CD4-positive, alpha-beta T cell (primary cell): ENCODE measurements at regions of chr1 and their contacts with region 1.

Region 1: GRCh38 chr1:37514350-37515184 is at the start of gene MEAF6:
- DNase-seq: peak; percentile 72 to 93 (median 80)
- ATAC-seq: peak; percentile 95
- H3K4me3 ChIP-seq: peak within 1 kb of the TSS; percentile 86
- H3K4me3 Mint-ChIP-seq: peak within 1 kb of the TSS; percentile 97
- H3K27ac ChIP-seq: peak within 1 kb of the TSS; percentile 79 to 95
- H3K27ac Mint-ChIP-seq: peak within 1 kb of the TSS; percentile 95
- H3K4me1 ChIP-seq: peaks cover 22% of the 10 kb centered on the region
- H3K4me1 Mint-ChIP-seq: peaks cover 46% of the 10 kb centered on the region
- H3K27me3 ChIP-seq: no peaks in the 10 kb centered on the region
- H3K27me3 Mint-ChIP-seq: no peaks in the 10 kb centered on the region
- CTCF ChIP-seq: peak; percentile 75
- total RNA-seq, gene MEAF6: 39.0 to 41.5 TPM

Region 2: GRCh38 chr1:37474046-37474759 is 40.4 kb before region 1 on chr1 and contains the start of gene ZC3H12A:
- CTCF ChIA-PET with region 1: interaction called, 28 read pairs
- POLR2A ChIA-PET with region 1: interaction called, 41 read pairs
- intact Hi-C with region 1: loop called in 1 of 2 experiments (anchors 2 kb)
- DNase-seq: peak; percentile 83 to 98 (median 93)
- ATAC-seq: peak; percentile 61
- H3K4me3 ChIP-seq: peak within 1 kb of the TSS; percentile 92
- H3K4me3 Mint-ChIP-seq: peak within 1 kb of the TSS; percentile 97
- H3K27ac ChIP-seq: peak within 1 kb of the TSS; percentile 95 to 97
- H3K27ac Mint-ChIP-seq: peak within 1 kb of the TSS; percentile 100
- H3K4me1 ChIP-seq: peaks cover 69% of the 10 kb centered on the region
- H3K4me1 Mint-ChIP-seq: peaks cover 66% of the 10 kb centered on the region
- H3K27me3 ChIP-seq: no peaks in the 10 kb centered on the region
- H3K27me3 Mint-ChIP-seq: no peaks in the 10 kb centered on the region
- CTCF ChIP-seq: no peak
- total RNA-seq, gene ZC3H12A: 164 to 165 TPM

Region 3: DNA sequence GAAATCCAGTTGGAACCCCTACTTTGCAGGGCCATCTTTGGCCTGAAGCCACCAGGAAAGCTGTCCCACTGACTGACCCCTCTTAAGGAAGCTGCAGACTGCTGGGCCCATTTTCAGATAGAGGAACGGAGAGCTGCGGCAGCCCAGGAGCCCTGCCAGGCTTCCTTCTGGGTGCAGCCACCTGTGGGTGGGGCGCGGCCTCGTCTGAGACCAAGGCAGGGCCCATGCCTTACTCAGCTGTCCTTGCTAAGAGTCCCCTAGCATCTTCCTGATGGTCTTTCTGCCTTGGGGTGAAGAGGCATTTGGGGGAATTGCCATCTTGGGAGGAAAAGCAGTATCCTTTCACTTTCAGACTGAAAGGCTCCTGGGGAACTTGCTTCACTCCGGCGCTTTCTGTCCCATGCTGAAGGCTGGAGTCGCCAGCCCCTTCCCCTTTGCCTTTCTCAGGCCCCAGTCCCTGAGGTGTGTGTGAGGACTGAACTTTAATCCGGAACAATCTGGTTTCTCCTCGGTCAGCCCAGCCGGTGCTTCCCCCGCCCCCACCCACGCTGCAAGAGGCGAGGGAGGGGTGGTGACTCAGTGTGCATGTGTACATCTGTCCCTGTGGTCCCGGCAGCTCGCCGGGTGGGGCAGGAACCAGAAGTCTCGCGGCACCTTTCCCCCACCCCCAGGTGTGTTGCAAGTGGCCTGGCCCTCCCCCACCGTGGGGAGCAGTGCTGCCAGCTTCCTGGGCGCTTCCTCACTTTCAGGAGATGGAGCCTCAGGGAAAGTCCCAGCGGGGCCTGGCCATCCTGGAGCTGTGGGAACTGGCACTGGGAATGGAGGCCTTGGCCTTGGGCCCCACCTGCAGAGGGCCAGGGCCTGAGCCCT is 35.1 kb before region 1 on chr1:
- CTCF ChIA-PET with region 1: interaction called, 28 read pairs
- POLR2A ChIA-PET with region 1: interaction called, 41 read pairs
- intact Hi-C with region 1: loop called in 1 of 2 experiments (anchors 2 kb)
- DNase-seq: peak; percentile 63 to 96 (median 89)
- ATAC-seq: peak; percentile 57
- H3K4me3 ChIP-seq: peak overlapping the region; percentile 92
- H3K4me3 Mint-ChIP-seq: peak overlapping the region; percentile 97
- H3K27ac ChIP-seq: peak overlapping the region; percentile 95 to 97
- H3K27ac Mint-ChIP-seq: peak overlapping the region; percentile 100
- H3K4me1 ChIP-seq: peaks cover 67% of the 10 kb centered on the region
- H3K4me1 Mint-ChIP-seq: peaks cover 56% of the 10 kb centered on the region
- H3K27me3 ChIP-seq: no peaks in the 10 kb centered on the region
- H3K27me3 Mint-ChIP-seq: no peaks in the 10 kb centered on the region
- CTCF ChIP-seq: no peak

Region 4: DNA sequence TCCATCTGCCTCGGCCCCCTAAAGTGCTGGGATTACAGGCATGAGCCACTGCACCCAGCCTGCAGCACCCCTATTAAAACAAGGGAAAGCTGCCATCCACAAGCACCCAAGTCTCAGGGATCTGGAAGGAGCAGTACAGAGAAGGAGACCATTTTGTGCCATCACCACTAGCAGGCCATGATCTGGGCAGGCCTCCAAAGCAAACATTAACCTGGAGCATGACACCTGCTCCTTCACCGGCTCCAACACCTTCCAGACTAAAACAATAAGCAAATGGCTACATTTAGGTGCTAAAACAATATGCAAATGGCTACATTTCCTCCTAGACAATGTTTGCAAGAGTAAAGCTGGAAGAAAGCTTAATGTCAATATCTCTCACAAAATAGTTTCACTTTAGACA is 16.7 kb before region 1 on chr1:
- CTCF ChIA-PET with region 1: interaction called, 12 read pairs
- POLR2A ChIA-PET with region 1: interaction called, 8 read pairs
- intact Hi-C with region 1: no loop called
- DNase-seq: no peak
- ATAC-seq: no peak
- H3K4me3 ChIP-seq: no peak overlapping the region
- H3K4me3 Mint-ChIP-seq: no peak overlapping the region
- H3K27ac ChIP-seq: no peak overlapping the region
- H3K27ac Mint-ChIP-seq: no peak overlapping the region
- H3K4me1 ChIP-seq: no peaks in the 10 kb centered on the region
- H3K4me1 Mint-ChIP-seq: peaks cover 28% of the 10 kb centered on the region
- H3K27me3 ChIP-seq: no peaks in the 10 kb centered on the region
- H3K27me3 Mint-ChIP-seq: no peaks in the 10 kb centered on the region
- CTCF ChIP-seq: no peak

Region 5: DNA sequence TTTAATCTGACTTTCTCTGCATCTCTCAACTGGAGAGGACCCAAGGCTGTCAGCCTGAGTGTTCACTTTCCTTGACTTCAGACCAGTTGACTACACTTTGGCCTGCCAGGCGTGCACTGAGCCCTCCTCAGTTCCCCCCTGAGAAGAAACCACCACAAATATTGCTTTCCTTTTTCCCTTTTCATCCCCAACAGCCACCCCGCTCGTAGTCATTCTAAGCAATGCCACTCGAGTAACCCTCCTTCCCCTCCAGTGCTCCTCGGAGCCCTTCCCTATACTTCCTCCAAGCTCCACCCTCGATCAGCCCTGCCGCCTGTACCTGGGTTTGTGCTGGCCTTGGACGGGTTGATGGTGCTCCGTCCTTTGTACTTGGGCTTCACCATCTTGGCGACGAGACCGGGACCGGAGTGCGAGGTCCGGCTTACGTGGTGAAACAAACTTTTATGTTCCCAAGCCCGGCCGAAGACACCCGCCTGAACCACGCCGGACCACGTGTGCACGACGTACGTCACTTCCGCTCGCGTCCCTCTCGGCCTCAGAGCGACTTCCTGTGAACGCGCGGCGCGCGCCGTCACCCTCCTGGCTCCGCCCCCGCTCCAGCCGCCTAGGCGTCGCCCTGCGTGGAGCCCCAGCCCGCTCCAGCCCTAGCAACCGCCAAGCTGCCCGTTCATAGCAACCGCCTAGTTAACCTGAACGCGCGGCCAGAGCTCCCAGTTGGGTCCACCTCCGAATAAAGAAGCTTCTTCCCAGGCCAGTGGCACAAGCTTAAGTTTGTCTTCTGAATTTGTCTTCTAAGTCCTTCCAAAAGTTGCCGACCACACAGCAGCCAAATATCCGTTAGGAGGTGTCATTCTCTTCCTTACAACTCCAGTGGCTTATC is 81.1 kb after region 1 on chr1 and contains the start of gene GNL2:
- CTCF ChIA-PET with region 1: interaction called, 5 read pairs
- POLR2A ChIA-PET with region 1: interaction called, 5 read pairs
- intact Hi-C with region 1: loop called in 1 of 2 experiments (anchors 2 kb)
- DNase-seq: peak; percentile 88 to 99 (median 96)
- ATAC-seq: peak; percentile 93
- H3K4me3 ChIP-seq: peak within 1 kb of the TSS; percentile 93
- H3K4me3 Mint-ChIP-seq: peak within 1 kb of the TSS; percentile 97
- H3K27ac ChIP-seq: peak within 1 kb of the TSS; percentile 75 to 90
- H3K27ac Mint-ChIP-seq: peak within 1 kb of the TSS; percentile 93
- H3K4me1 ChIP-seq: peaks cover 22% of the 10 kb centered on the region
- H3K4me1 Mint-ChIP-seq: peaks cover 34% of the 10 kb centered on the region
- H3K27me3 ChIP-seq: no peaks in the 10 kb centered on the region
- H3K27me3 Mint-ChIP-seq: no peaks in the 10 kb centered on the region
- CTCF ChIP-seq: no peak
- total RNA-seq, gene GNL2: 43.4 to 44.5 TPM